BJ (cell line): ENCODE measurements at regions of chr1 and their contacts with region 1.

Region 1: DNA sequence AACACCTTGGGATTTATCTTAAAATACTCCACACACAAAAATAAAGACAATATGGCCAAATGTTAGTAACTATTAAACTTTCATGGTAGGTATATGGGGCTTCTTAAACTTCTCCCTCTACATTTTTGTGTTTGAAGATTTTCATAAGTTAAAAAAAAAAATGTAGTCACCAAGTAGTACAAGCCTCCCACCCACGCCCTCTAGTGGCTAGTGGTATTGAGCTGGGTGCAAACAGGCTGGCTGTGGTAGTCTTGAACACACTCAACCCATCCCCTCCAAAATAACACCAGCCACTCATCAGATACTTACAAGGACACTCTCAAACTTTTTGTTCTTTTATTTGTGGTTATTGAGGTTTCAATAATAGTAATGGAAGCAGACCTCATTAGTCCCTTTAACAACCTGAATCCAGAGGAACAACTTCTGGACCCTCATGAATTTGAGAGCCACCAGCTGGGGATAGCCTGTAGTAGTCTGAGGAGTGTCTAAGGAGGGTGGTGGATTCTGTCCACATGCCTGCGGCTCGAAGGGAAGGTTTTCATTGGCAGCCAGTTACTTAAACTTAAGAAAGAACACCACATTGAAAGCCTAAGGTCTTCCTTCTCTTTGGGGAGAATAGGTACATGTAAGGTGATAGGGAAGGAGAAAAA is 15.6 kb downstream of the RD3 start:
- DNase-seq: no peak
- H3K4me3 ChIP-seq: no peak overlapping the region
- H3K27me3 ChIP-seq: peaks cover 9% of the 10 kb centered on the region
- CTCF ChIP-seq: peak; percentile 95

Region 2: DNA sequence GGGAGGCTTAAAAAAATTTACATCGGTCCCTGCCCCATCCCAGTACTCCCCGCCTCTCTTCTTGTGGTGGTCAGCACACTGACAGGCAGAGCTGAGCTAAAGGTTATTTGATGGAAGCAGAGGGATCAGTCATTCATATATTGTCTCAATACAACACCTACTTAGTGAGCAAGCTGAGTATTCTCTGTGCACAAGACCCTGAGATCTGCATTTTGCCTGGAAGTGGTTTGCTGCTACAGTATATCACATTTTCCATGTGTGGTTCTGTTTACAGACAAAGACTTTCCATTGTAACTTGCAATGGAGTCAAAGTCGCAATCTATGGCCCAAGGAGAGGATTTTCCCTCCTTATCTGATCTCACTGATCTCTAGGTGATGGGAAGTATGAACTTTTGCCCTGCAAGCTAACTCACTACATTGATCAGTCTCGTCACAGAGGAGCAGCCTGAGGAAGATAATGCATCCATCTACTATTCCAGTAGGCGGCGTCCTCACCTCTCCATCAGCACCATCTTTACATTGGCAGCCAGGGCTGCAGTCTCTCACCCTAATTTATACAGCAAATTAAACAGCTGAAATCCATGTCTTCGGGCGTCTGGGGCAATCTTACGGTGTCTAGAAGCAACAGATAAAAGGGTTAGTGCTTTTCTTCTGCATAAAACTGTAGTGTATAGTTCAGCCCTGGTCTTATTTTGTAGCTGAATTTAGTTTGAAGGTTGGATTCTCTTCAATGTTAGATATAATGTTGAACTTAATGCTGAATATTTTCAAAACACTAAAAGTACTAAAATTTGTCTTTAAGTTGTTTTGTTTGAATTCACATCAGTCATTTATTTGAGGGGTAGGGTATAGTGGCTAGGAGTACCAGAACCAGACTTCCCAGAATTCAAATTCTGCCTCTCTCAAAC is 152.9 kb before region 1 on chr1:
- CTCF ChIA-PET with region 1: interaction called, 49 read pairs
- POLR2A ChIA-PET with region 1: no interaction called
- DNase-seq: no peak
- H3K4me3 ChIP-seq: no peak overlapping the region
- H3K27me3 ChIP-seq: no peaks in the 10 kb centered on the region
- CTCF ChIP-seq: peak; percentile 88

Region 3: DNA sequence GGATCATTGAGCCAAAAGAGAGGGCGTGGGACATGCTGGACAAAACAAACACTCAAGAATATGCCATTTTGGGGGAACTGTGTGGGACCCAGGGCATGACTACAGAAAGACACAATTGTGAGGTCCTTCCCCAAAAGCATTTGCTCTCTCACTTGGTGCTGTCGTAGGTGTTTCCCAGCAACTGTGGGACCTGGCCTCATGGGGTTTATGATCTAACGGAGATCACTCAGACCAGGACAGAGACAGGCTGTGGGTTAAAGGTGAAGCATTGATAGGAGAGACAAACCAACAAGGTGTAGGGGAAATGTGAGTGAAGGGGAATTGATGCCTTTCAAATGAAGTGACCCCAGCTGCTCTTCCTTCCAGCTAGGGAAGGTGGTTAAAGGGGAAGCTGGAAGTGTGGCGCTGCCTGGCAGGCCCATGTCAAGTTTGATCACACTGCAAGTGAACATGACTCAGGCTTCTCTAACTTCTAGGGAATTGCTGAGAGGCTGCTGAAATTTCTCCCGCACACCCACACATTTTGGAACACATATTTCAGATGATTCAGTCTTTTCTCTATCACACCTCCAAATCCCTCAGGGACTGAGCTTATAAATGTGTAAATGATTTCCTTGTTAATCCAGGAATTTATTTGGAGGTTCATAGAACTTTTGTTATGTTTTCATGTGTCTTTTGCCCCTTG is 119.5 kb before region 1 on chr1:
- CTCF ChIA-PET with region 1: interaction called, 10 read pairs
- POLR2A ChIA-PET with region 1: no interaction called
- DNase-seq: no peak
- H3K4me3 ChIP-seq: no peak overlapping the region
- H3K27me3 ChIP-seq: no peaks in the 10 kb centered on the region
- CTCF ChIP-seq: no peak

Region 4: GRCh38 chr1:211591980-211592493 is 115.7 kb after region 1 on chr1:
- CTCF ChIA-PET with region 1: no interaction called
- POLR2A ChIA-PET with region 1: no interaction called
- DNase-seq: peak; percentile 73
- H3K4me3 ChIP-seq: no peak overlapping the region
- H3K27me3 ChIP-seq: no peaks in the 10 kb centered on the region
- CTCF ChIP-seq: no peak